K562 (cell line): ENCODE measurements at regions of chr1 and their contacts with region 1.

Region 1: GRCh38 chr1:114757455-114758250 is at the start of gene CSDE1:
- DNase-seq: peak; percentile 95 to 99 (median 96)
- ATAC-seq: peak; percentile 95
- H3K4me3 ChIP-seq: peak within 1 kb of the TSS; percentile 93
- H3K27ac ChIP-seq: peak within 1 kb of the TSS; percentile 100
- H3K4me1 ChIP-seq: peaks cover 3 to 26% of the 10 kb centered on the region in 2 experiments; a peak in 4 of 5 replicates
- H3K27me3 ChIP-seq: no peaks in the 10 kb centered on the region
- CTCF ChIP-seq: peak; percentile 75 to 85 (median 84)
- EP300 ChIP-seq: 0 out of 2 replicates have a peak, but pooled peaks have one; percentile 9
- POLR2A ChIP-seq: peak; percentile 99
- RAD21 ChIP-seq: peak; percentile 32 to 62; a peak in 3 of 4 replicates
- polyA plus RNA-seq, gene CSDE1: 174 to 365 TPM

Region 2: DNA sequence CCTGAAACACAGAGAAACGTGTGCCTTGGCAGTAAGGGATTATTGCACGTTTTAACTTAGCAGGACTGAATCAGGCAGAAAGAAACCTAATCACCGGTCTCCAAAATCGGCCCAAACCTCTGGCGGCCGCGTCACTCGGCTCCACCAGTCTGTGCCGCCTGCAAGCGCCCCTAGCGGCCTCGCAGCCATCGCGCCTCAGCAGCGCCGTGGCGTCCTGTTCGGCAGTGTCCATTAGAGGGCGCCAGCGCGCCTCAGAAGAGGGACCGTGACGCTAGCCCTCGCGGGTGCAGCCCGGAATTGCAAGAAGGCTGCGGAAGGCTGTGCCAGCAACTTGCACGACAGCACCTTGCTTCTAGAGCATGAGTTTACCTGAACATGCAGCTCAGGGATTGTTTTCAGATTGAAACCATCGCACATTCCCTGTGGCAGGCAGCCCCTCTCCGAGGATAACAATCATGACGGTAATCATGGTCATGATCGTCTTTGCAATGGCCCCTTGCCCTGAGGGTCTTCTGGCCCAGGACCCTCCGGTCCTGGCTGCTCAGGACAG is 411.1 kb before region 1 on chr1:
- CTCF ChIA-PET with region 1: interaction called, 4 read pairs
- POLR2A ChIA-PET with region 1: no interaction called
- in situ Hi-C with region 1: no loop called
- intact Hi-C with region 1: loop called (anchors 10 kb)
- DNase-seq: peak; percentile 95 to 98 (median 96)
- ATAC-seq: peak; percentile 99
- H3K4me3 ChIP-seq: peak overlapping the region; percentile 20
- H3K27ac ChIP-seq: no peak overlapping the region
- H3K4me1 ChIP-seq: peaks cover 2 to 12% of the 10 kb centered on the region in 2 experiments; a peak in 4 of 5 replicates
- H3K27me3 ChIP-seq: no peaks in the 10 kb centered on the region; a peak in 1 of 5 replicates
- CTCF ChIP-seq: peak; percentile 100
- EP300 ChIP-seq: peak; percentile 50
- POLR2A ChIP-seq: no peak
- RAD21 ChIP-seq: peak; percentile 100

Region 3: GRCh38 chr1:114453361-114453784 is 304.3 kb before region 1 on chr1:
- CTCF ChIA-PET with region 1: no interaction called
- POLR2A ChIA-PET with region 1: no interaction called
- in situ Hi-C with region 1: no loop called
- intact Hi-C with region 1: no loop called
- DNase-seq: peak in 3 of 4 experiments; percentile 23 to 84 (median 64)
- ATAC-seq: peak; percentile 89
- H3K4me3 ChIP-seq: no peak overlapping the region
- H3K27ac ChIP-seq: peak overlapping the region; percentile 47; the same call in 2 of the 3 replicates
- H3K4me1 ChIP-seq: peaks cover 7 to 23% of the 10 kb centered on the region in 2 experiments; a peak in 4 of 5 replicates
- H3K27me3 ChIP-seq: no peaks in the 10 kb centered on the region
- CTCF ChIP-seq: no peak
- EP300 ChIP-seq: peak; percentile 80
- POLR2A ChIP-seq: no peak
- RAD21 ChIP-seq: no peak

Region 4: GRCh38 chr1:114581335-114582287 is 176.0 kb before region 1 on chr1 and contains the start of gene BCAS2:
- CTCF ChIA-PET with region 1: no interaction called
- POLR2A ChIA-PET with region 1: no interaction called
- in situ Hi-C with region 1: no loop called
- intact Hi-C with region 1: loop called (anchors 5 kb)
- DNase-seq: peak; percentile 88 to 99 (median 91)
- ATAC-seq: peak; percentile 99
- H3K4me3 ChIP-seq: peak within 1 kb of the TSS; percentile 73
- H3K27ac ChIP-seq: peak within 1 kb of the TSS; percentile 73
- H3K4me1 ChIP-seq: peaks cover 3 to 4% of the 10 kb centered on the region in 2 experiments; a peak in 2 of 5 replicates
- H3K27me3 ChIP-seq: no peaks in the 10 kb centered on the region; a peak in 1 of 5 replicates
- CTCF ChIP-seq: no peak
- EP300 ChIP-seq: peak; percentile 61
- POLR2A ChIP-seq: peak; percentile 98
- RAD21 ChIP-seq: peak in 1 of 2 experiments; percentile 12; a peak in 2 of 4 replicates
- polyA plus RNA-seq, gene BCAS2: 160 to 183 TPM

Region 5: DNA sequence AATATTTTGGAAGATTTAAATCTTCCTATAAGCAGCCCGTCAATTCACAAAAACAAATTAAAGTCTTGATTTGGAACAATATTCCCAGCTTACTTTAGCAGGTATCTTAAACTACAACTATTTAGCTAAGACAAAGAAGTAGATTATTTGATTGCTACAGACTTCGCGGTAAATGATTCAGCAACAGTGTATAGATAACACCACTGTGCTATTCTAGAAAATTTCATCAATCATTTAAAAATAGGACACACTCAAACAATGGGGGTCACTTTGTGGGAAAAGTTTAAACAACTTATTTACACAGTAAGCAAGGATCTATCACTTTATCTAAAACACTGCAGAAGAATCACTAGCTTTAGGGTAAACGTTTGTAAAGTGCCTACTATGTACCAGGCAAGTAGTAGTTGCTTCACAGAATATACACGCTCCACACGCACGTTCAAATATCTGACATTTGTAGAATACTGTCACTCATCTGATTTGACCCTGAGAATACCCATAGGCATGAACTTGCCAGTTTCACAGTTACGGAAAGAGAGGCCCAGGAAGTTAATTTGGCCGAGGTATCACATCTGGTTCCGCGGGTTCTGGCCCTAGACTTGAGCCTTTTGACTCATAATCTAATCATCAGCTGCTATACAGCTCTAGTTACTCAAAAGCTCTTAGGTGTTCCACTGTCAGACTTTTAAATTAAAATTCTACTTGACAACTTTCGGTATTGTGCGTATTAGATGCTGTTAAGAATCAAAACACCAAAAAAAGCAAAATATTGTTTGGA is 88.7 kb before region 1 on chr1:
- CTCF ChIA-PET with region 1: no interaction called
- POLR2A ChIA-PET with region 1: no interaction called
- in situ Hi-C with region 1: no loop called
- intact Hi-C with region 1: no loop called
- DNase-seq: no peak
- ATAC-seq: no peak
- H3K4me3 ChIP-seq: peak overlapping the region; percentile 45; the same call in 1 of the 2 replicates
- H3K27ac ChIP-seq: no peak overlapping the region
- H3K4me1 ChIP-seq: peaks cover 4 to 13% of the 10 kb centered on the region in 2 experiments; a peak in 3 of 5 replicates
- H3K27me3 ChIP-seq: peaks cover 0 to 11% of the 10 kb centered on the region in 2 experiments; a peak in 2 of 5 replicates
- CTCF ChIP-seq: no peak
- EP300 ChIP-seq: no peak
- POLR2A ChIP-seq: no peak
- RAD21 ChIP-seq: no peak

Region 6: DNA sequence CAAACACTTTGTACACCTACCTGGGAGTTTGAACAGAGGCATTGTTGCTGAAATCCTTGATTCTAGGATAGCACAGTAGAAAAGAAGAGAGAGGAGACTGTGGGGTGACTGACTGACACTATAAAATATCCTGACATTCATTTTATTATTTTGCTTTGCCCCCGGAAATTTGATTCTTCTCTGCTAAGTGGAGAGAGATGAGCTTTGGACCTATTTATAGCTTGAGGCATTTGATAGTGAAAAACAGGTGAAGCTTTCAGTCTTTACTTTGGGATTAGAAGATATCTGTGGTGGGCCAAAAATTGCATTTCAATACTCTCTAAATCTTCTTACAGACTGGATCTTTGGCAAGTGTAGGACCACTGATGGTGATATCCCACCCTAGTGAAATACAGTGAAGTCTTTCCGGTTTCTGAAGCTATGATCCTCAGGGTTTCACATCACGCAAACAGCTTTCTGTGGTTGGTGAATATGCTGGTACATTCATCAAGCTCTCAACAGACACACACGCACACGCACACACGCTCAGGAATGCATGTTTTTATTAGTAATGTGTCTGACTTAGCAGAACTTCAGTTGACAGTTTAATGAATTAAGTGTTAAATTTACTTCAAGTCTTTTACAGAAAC is 62.1 kb before region 1 on chr1 and contains the start of gene AMPD1:
- CTCF ChIA-PET with region 1: no interaction called
- POLR2A ChIA-PET with region 1: no interaction called
- in situ Hi-C with region 1: no loop called
- intact Hi-C with region 1: no loop called
- DNase-seq: no peak
- ATAC-seq: no peak
- H3K4me3 ChIP-seq: no peak within 1 kb of the TSS
- H3K27ac ChIP-seq: no peak within 1 kb of the TSS
- H3K4me1 ChIP-seq: no peaks in the 10 kb centered on the region
- H3K27me3 ChIP-seq: peaks cover 15 to 16% of the 10 kb centered on the region in 2 experiments
- CTCF ChIP-seq: no peak
- EP300 ChIP-seq: no peak
- POLR2A ChIP-seq: no peak
- RAD21 ChIP-seq: no peak
- polyA plus RNA-seq, gene AMPD1: not detected

Region 7: GRCh38 chr1:114716304-114717170 is 41.1 kb before region 1 on chr1 and contains the start of gene NRAS:
- CTCF ChIA-PET with region 1: no interaction called
- POLR2A ChIA-PET with region 1: interaction called, 5 read pairs
- in situ Hi-C with region 1: no loop called
- intact Hi-C with region 1: loop called (anchors 2 kb)
- DNase-seq: peak; percentile 96 to 98 (median 96)
- ATAC-seq: peak; percentile 97
- H3K4me3 ChIP-seq: peak within 1 kb of the TSS; percentile 86
- H3K27ac ChIP-seq: peak within 1 kb of the TSS; percentile 97
- H3K4me1 ChIP-seq: peaks cover 0 to 9% of the 10 kb centered on the region in 2 experiments; a peak in 2 of 5 replicates
- H3K27me3 ChIP-seq: no peaks in the 10 kb centered on the region
- CTCF ChIP-seq: peak in 1 of 3 experiments; percentile 6; a peak in 1 of 6 replicates
- EP300 ChIP-seq: peak; percentile 53; the same call in 1 of the 2 replicates
- POLR2A ChIP-seq: peak; percentile 93
- RAD21 ChIP-seq: peak in 1 of 2 experiments; percentile 33; a peak in 3 of 4 replicates
- polyA plus RNA-seq, gene NRAS: 58.2 to 79.7 TPM

Region 8: GRCh38 chr1:114745291-114745690 is 12.4 kb before region 1 on chr1:
- CTCF ChIA-PET with region 1: no interaction called
- POLR2A ChIA-PET with region 1: interaction called, 17 read pairs
- in situ Hi-C with region 1: no loop called
- intact Hi-C with region 1: no loop called
- DNase-seq: no peak
- ATAC-seq: no peak
- H3K4me3 ChIP-seq: no peak overlapping the region
- H3K27ac ChIP-seq: no peak overlapping the region
- H3K4me1 ChIP-seq: no peaks in the 10 kb centered on the region
- H3K27me3 ChIP-seq: no peaks in the 10 kb centered on the region
- CTCF ChIP-seq: no peak
- EP300 ChIP-seq: no peak
- POLR2A ChIP-seq: 0 out of 2 replicates have a peak, but pooled peaks have one; percentile 25
- RAD21 ChIP-seq: no peak

Region 9: DNA sequence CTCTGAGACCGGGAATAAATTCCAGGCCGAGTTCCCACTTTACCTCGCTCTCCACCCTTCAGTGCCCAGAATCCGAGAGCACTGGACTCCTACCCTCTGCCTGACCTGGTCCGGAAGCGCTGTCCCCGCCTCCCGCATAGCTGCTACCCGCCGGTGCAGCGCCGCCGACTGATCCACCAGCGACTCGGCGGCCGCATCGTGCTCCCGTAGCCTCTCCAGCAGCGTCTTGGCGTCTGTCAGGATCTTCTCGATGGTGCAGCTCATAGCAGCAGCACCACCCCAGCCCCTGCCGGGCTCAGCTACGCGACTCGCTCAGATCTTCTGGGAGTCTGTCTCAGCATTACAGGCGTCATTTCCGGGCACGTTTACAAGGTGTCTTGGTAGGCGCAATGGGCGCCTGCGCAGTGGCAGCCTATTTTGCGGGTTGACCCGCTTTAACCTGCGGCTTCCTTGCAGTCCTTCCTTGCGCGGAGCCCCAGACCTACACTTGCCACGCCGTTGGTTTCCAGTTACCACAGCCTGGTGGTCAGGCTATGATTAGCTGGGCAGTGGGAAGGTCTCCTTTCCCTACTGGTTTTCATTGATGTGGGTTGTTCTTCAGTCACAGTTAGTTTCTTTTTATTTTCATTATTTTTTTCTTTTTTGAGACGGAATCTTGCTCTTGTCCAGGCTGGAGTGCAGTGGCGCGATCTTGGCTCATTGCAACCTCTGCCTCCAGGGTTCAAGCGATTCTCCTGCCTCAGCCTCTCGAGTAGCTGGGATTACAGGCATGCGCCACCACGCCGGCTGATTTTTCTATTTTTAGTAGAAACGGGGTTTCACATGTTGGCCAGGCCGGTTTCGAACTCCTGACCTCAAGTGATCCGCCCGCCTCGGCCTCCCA is 22.9 kb after region 1 on chr1 and contains the start of gene SIKE1:
- CTCF ChIA-PET with region 1: no interaction called
- POLR2A ChIA-PET with region 1: interaction called, 16 read pairs
- in situ Hi-C with region 1: no loop called
- intact Hi-C with region 1: loop called (anchors 1 kb)
- DNase-seq: peak; percentile 84 to 99 (median 92)
- ATAC-seq: peak; percentile 99
- H3K4me3 ChIP-seq: peak within 1 kb of the TSS; percentile 75
- H3K27ac ChIP-seq: peak within 1 kb of the TSS; percentile 82
- H3K4me1 ChIP-seq: peaks cover 4 to 9% of the 10 kb centered on the region in 2 experiments; a peak in 3 of 5 replicates
- H3K27me3 ChIP-seq: no peaks in the 10 kb centered on the region
- CTCF ChIP-seq: peak in 1 of 3 experiments; percentile 8; a peak in 2 of 6 replicates
- EP300 ChIP-seq: no peak
- POLR2A ChIP-seq: peak; percentile 99
- RAD21 ChIP-seq: no peak
- polyA plus RNA-seq, gene SIKE1: 21.8 to 31.4 TPM

Region 10: GRCh38 chr1:114833421-114833820 is 75.8 kb after region 1 on chr1:
- CTCF ChIA-PET with region 1: no interaction called
- POLR2A ChIA-PET with region 1: no interaction called
- in situ Hi-C with region 1: no loop called
- intact Hi-C with region 1: no loop called
- DNase-seq: no peak
- ATAC-seq: peak; percentile 54
- H3K4me3 ChIP-seq: no peak overlapping the region
- H3K27ac ChIP-seq: no peak overlapping the region
- H3K4me1 ChIP-seq: no peaks in the 10 kb centered on the region
- H3K27me3 ChIP-seq: no peaks in the 10 kb centered on the region
- CTCF ChIP-seq: no peak
- EP300 ChIP-seq: no peak
- POLR2A ChIP-seq: no peak
- RAD21 ChIP-seq: no peak